CD4-positive, alpha-beta T cell (primary cell): ENCODE measurements at regions of chr1 and their contacts with region 1.

Region 1: DNA sequence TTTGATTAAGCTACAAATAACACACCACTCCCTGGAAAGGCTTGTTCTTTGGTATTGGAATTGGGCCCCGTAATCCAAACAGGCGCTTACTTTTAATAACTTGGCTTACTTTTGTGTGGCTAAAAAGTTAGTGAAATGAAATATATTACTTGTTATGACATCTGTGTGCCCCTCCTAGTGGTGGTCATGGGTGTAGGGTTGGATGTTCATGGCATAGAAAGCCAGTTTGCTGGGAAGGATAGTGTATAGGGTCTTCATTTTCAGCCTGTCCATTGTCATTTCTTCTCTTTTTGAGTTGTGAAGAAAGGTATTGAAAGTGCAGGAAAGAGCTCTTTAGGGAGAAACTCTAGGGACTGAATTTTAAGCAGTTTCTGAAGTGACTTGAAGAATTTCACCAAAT is 5.9 kb downstream of the CDC14A start:
- DNase-seq: peak in 7 of 14 experiments; percentile 6 to 60 (median 20)
- ATAC-seq: peak; percentile 40
- H3K4me3 ChIP-seq: peak overlapping the region; percentile 8
- H3K4me3 Mint-ChIP-seq: peak overlapping the region; percentile 73
- H3K27ac ChIP-seq: no peak overlapping the region
- H3K27ac Mint-ChIP-seq: peak overlapping the region; percentile 37
- H3K4me1 ChIP-seq: peaks cover 63% of the 10 kb centered on the region
- H3K4me1 Mint-ChIP-seq: peaks cover 95% of the 10 kb centered on the region
- H3K27me3 ChIP-seq: no peaks in the 10 kb centered on the region
- H3K27me3 Mint-ChIP-seq: no peaks in the 10 kb centered on the region
- CTCF ChIP-seq: peak; percentile 54

Region 2: GRCh38 chr1:100377590-100378361 is 19.6 kb after region 1 on chr1:
- CTCF ChIA-PET with region 1: interaction called, 5 read pairs
- POLR2A ChIA-PET with region 1: interaction called, 8 read pairs
- intact Hi-C with region 1: loop called in 1 of 2 experiments (anchors 2 kb)
- DNase-seq: peak in 1 of 14 experiments; percentile 34
- ATAC-seq: peak; percentile 35
- H3K4me3 ChIP-seq: no peak overlapping the region
- H3K4me3 Mint-ChIP-seq: peak overlapping the region; percentile 50
- H3K27ac ChIP-seq: peak overlapping the region in 1 of 2 donors; percentile 5
- H3K27ac Mint-ChIP-seq: peak overlapping the region; percentile 52
- H3K4me1 ChIP-seq: peaks cover 30% of the 10 kb centered on the region
- H3K4me1 Mint-ChIP-seq: peaks cover 86% of the 10 kb centered on the region
- H3K27me3 ChIP-seq: no peaks in the 10 kb centered on the region
- H3K27me3 Mint-ChIP-seq: no peaks in the 10 kb centered on the region
- CTCF ChIP-seq: no peak

Region 3: DNA sequence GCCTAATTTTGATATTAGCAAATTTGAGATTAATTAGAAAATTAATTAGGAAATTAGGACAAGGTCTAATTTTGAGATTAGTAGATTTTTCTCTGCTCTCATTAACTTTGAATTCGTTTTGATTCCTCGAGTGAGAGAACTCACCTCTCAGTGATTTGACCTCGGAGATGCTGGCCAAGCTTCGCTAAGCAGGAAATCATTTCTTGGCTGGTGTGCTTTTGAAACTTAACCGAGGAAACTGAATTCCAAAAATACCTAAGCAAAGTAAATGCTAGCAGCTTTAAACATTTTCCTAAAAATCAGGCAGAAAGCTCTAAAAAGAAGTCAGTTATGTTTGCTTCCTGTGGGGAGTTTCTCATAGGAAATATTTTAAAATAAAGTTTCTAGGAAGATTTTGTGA is 29.0 kb after region 1 on chr1:
- CTCF ChIA-PET with region 1: interaction called, 13 read pairs
- POLR2A ChIA-PET with region 1: interaction called, 67 read pairs
- intact Hi-C with region 1: loop called (anchors 2 to 5 kb)
- DNase-seq: peak in 2 of 14 experiments; percentile 32
- ATAC-seq: no peak
- H3K4me3 ChIP-seq: peak overlapping the region; percentile 35
- H3K4me3 Mint-ChIP-seq: peak overlapping the region; percentile 74
- H3K27ac ChIP-seq: peak overlapping the region in 1 of 2 donors; percentile 78
- H3K27ac Mint-ChIP-seq: peak overlapping the region; percentile 83
- H3K4me1 ChIP-seq: peaks cover 55% of the 10 kb centered on the region
- H3K4me1 Mint-ChIP-seq: peaks cover 94% of the 10 kb centered on the region
- H3K27me3 ChIP-seq: no peaks in the 10 kb centered on the region
- H3K27me3 Mint-ChIP-seq: no peaks in the 10 kb centered on the region
- CTCF ChIP-seq: no peak